Activated CD4-positive, alpha-beta T cell treated with anti-CD3 and anti-CD28 coated beads for 36 hours (primary cell): ENCODE measurements at regions of chr17 and their contacts with region 1.

Region 1: GRCh38 chr17:35312790-35313711 is 60.4 kb downstream of the SLFN11 start:
- DNase-seq: peak; percentile 77
- ATAC-seq: peak; percentile 86
- H3K4me3 Mint-ChIP-seq: peak overlapping the region; percentile 73
- H3K27ac Mint-ChIP-seq: peak overlapping the region; percentile 86
- H3K4me1 Mint-ChIP-seq: peaks cover 28% of the 10 kb centered on the region
- H3K27me3 Mint-ChIP-seq: no peaks in the 10 kb centered on the region

Region 2: DNA sequence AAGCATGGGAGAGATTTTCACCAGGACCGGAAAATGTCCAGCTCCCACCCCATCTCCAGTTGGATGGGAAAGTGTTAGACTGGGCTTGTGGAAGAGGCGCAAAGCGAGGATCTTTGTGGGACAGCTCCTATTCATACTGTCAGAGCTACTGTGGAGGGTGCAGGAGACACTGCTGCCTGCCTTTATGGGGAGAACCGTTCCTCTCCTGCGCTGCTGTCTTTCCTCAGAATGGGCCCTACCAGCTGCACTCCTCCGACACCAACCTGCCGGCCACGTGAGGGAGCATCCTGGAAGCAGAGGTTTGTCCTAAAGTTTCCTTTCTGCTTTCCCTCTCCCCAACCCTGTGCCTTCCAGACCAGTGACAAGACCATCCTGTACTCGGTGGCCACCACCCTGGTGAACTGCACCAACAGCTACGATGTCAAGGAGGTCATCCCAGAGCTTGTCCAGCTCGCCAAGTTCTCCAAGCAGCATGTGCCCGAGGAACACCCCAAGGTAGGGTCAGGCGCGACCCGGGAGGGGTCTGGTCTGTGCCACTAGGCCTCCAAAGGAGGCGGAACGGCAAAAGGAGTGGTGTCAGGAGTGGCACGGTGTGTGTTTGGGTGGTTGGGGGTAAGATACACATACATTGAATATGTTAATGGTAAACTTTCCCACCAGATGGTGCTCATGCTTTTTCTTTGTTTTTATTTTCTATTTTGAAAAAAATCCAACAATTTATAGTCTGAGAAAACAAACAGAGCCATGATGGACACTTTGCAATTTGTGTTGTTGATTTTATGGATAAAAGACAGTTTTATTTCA is 141.9 kb before region 1 on chr17:
- CTCF ChIA-PET with region 1: interaction called, 5 read pairs
- POLR2A ChIA-PET with region 1: no interaction called
- intact Hi-C with region 1: loop called in 1 of 2 experiments (anchors 1 kb)
- DNase-seq: peak; percentile 32
- ATAC-seq: peak; percentile 76
- H3K4me3 Mint-ChIP-seq: no peak overlapping the region
- H3K27ac Mint-ChIP-seq: peak overlapping the region; percentile 47
- H3K4me1 Mint-ChIP-seq: peaks cover 39% of the 10 kb centered on the region
- H3K27me3 Mint-ChIP-seq: no peaks in the 10 kb centered on the region

Region 3: DNA sequence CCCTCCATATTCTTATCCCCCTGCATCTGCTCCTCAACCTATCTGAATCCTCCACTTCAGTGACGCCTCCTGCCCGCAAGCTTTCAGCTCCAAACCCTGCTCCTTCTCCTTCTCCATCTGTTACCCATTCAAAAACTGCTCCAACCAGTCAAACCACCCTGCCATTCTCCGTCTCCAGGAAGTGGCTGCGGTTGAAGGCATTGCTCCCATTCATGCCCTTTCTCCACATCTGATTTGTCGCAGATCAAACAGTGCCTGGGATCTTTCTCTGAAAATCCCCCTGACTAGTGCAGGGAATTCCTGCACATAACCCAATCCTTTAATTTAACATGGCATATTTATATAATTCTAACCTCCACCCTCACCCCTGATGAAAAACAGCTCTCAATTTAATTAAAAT is 13.9 kb before region 1 on chr17:
- CTCF ChIA-PET with region 1: interaction called, 20 read pairs
- POLR2A ChIA-PET with region 1: no interaction called
- intact Hi-C with region 1: no loop called
- DNase-seq: no peak
- ATAC-seq: no peak
- H3K4me3 Mint-ChIP-seq: no peak overlapping the region
- H3K27ac Mint-ChIP-seq: no peak overlapping the region
- H3K4me1 Mint-ChIP-seq: peaks cover 5% of the 10 kb centered on the region
- H3K27me3 Mint-ChIP-seq: no peaks in the 10 kb centered on the region

Region 4: DNA sequence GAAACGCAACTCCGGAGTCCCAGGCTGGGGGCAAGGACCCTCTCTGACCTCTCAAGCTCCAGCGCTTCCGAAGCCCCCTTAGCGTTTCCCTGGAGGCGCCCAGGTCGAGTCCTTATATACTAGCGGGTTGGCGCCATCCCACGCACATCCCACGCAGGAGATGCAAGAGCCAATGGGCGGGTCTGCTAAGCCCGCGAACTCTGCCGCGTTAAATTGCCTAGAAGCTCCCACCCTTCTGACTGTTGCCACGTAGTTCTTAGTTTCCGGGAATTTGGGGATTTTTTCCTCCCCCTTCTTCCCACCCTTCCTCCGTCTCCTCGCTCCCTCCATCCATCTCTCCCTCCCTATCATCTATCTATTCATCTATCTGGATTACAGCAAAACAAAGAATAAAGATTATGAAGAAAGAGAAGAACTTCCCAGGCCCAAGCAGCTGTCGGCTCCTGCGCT is 60.5 kb after region 1 on chr17 and contains the start of gene SLFN11:
- CTCF ChIA-PET with region 1: interaction called, 4 read pairs
- POLR2A ChIA-PET with region 1: interaction called, 12 read pairs
- intact Hi-C with region 1: loop called (anchors 1 to 2 kb)
- DNase-seq: peak; percentile 95
- ATAC-seq: peak; percentile 70
- H3K4me3 Mint-ChIP-seq: peak within 1 kb of the TSS; percentile 85
- H3K27ac Mint-ChIP-seq: peak within 1 kb of the TSS; percentile 98
- H3K4me1 Mint-ChIP-seq: peaks cover 50% of the 10 kb centered on the region
- H3K27me3 Mint-ChIP-seq: peaks cover 1% of the 10 kb centered on the region
- total RNA-seq, gene SLFN11: 63.7 to 67.9 TPM

Region 5: DNA sequence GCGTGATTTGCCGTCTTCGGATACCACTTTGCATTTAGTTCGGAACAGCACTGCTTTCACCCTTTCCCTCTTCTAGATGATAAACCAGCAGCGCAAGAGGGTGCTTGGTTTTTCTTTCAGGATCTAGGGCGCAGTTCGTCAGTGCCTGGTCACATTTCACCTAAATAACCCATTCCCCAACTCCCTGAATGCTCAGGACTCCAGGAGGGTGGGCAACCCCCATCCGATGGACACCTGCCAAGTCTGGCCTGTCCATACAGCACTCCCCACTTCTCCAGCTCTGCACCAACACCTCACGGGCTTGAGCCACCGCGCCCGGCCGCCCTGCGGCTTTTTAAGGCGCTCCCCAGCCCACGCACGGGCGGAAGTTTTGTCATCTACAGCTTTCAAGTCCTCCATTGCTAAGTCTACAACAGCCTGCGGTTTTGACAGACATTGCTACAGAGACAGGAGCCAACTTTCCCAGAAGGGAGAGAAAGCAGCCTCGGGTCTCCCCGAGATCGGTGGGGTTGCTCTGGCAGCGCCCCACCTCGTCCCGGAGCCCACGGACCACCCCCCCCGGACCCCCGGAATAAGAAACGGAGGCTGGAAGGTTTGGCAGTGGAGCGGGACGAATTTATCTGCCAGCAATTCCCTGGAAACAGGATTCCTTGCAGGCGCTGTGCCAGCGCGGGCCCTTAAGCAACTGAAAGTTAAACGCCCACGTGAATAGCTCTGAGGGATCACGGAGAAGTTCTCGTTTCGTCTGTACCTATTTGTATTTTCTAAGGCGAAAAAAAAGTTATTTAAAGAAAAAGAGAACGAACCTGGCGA is 174.1 kb after region 1 on chr17:
- CTCF ChIA-PET with region 1: interaction called, 6 read pairs
- POLR2A ChIA-PET with region 1: no interaction called
- intact Hi-C with region 1: loop called (anchors 1 to 2 kb)
- DNase-seq: peak; percentile 92
- ATAC-seq: peak; percentile 71
- H3K4me3 Mint-ChIP-seq: peak overlapping the region; percentile 82
- H3K27ac Mint-ChIP-seq: peak overlapping the region; percentile 91
- H3K4me1 Mint-ChIP-seq: peaks cover 36% of the 10 kb centered on the region
- H3K27me3 Mint-ChIP-seq: peaks cover 11% of the 10 kb centered on the region

Region 6: DNA sequence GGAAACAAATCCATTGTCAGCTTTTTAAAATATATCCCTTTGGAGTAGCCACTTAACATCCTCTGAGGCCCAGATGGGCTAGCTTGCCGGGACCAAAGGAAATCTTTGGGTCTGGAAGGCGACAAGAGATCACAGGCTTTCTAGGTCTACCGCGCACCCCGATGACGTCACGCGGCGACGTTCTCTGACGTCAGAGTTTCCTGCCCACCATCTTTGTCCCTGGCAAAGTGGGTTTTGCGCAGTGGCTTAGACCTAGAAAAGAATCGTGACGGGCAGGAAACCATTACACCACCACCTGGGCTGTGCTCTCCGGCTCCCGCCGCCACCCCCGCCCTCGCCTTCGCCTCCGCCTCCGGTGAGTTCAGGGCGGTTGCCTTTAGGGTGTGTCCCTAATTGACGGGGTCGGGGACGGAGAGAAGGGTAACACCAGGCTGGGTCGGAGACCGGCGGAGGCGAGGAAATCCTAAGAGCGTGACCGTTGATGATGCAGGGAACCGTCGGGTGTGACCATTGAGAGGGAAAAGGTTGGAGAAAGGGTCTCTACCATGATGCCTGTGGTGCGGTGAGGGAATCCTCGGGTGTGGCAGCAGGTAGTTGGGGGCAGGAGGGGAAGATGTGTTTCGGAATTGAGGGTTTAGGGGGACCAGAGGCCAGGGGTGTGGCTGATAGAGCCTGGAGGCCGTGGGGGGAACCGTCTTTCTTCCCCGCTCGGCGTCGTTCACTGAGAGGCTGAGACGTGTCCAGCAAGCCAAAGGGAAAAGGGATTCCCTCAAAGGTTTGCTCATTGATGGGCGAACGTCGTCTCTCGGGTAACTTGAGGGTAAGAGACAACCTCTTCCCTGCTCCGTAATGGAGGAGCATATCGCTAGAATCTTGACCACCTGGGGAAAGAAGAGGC is 274.3 kb after region 1 on chr17 and contains the start of gene AP2B1:
- CTCF ChIA-PET with region 1: interaction called, 5 read pairs
- POLR2A ChIA-PET with region 1: no interaction called
- intact Hi-C with region 1: loop called in 1 of 2 experiments (anchors 1 kb)
- DNase-seq: peak; percentile 96
- ATAC-seq: peak; percentile 94
- H3K4me3 Mint-ChIP-seq: peak within 1 kb of the TSS; percentile 98
- H3K27ac Mint-ChIP-seq: peak within 1 kb of the TSS; percentile 98
- H3K4me1 Mint-ChIP-seq: peaks cover 25% of the 10 kb centered on the region
- H3K27me3 Mint-ChIP-seq: no peaks in the 10 kb centered on the region
- total RNA-seq, gene AP2B1: 166 to 184 TPM

Region 7: DNA sequence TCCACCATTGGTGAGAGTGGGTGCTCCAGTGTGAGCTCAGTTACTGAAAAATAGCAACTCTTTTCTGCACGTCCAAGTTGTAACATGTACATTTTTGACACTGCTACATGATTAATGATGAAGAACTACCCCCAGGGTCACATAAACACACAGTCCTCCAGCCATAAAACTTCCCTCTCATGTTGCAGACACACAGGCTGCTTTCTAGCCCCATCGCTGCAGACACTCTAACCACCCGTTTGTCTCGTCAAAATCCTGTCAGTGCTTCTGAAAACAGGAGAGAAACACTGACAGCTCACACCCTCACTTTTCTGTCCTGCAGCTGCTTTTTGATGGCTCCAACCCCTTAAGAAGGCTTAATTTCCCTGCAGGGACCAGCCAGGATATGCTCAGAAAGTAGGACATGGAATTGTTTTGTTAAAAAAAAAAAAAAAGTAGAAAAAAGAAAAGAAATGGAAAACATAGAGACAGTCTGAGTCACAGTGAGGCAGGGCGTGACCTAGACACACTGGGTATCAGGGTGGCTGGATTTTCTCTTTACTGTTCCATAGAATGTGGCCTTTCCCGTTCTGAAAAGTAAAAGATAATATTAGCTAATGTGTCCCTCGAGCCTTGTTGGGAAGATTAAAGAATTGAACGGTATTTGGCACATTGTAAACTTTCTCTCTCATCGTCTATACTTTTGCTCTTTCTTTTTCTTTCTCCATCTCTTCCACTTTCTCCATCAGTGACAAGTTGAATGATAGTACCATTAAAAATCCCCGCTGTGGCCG is 587.8 kb after region 1 on chr17:
- CTCF ChIA-PET with region 1: no interaction called
- POLR2A ChIA-PET with region 1: no interaction called
- intact Hi-C with region 1: no loop called
- DNase-seq: no peak
- ATAC-seq: no peak
- H3K4me3 Mint-ChIP-seq: peak overlapping the region; percentile 6
- H3K27ac Mint-ChIP-seq: peak overlapping the region; percentile 44
- H3K4me1 Mint-ChIP-seq: peaks cover 26% of the 10 kb centered on the region
- H3K27me3 Mint-ChIP-seq: peaks cover 3% of the 10 kb centered on the region